ENCODE measurements at regions of chr1 and their contacts with region 1.

Region 1: GRCh38 chr1:162878000-162878596 is 17.1 kb upstream of the CCDC190 start:
- DNase-seq: no peak
- H3K4me3 ChIP-seq: no peak overlapping the region
- CTCF ChIP-seq: peak; percentile 70

Region 2: GRCh38 chr1:162847839-162848453 is 30.2 kb before region 1 on chr1:
- CTCF ChIA-PET with region 1: interaction called, 47 read pairs
- POLR2A ChIA-PET with region 1: no interaction called
- DNase-seq: no peak
- H3K4me3 ChIP-seq: no peak overlapping the region
- CTCF ChIP-seq: peak; percentile 83

Region 3: GRCh38 chr1:162861101-162861500 is 17.0 kb before region 1 on chr1 and contains the start of gene CCDC190:
- CTCF ChIA-PET with region 1: interaction called, 43 read pairs
- POLR2A ChIA-PET with region 1: interaction called, 6 read pairs
- DNase-seq: no peak
- H3K4me3 ChIP-seq: no peak within 1 kb of the TSS
- CTCF ChIP-seq: no peak

Region 4: DNA sequence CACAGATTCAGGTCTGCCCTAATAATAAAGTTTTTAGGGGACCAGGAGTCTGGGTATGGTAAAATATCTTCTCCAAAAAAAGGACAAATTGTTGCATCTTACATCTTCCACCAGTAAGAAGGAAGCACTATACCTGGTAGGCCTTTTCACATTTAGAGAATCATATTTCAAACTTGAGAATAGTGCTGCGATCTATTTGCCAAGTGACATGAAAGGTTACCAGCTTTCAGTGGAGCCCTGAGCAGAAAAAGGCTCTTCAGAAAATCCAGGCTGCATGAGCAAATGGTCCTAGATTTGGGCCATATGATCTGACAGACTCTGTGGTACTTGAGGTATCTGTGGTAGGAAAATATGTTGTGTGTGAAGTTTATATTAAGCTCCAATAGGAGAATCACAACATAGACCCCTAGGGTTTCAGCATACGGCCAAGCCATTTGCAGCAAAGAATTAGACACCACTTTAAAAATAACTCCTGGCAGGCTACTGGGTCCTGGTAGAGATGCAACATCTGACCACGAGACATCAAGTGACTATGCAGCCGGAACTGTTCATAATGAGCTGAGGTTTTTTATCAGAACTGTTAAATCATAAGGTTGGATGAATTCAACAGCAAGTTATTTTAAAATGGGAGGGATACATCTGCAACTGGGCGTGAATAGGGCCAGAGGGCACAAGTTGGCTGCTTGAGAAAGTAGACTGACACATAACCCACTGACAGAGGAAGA is 21.5 kb after region 1 on chr1:
- CTCF ChIA-PET with region 1: interaction called, 17 read pairs
- POLR2A ChIA-PET with region 1: no interaction called
- DNase-seq: peak; percentile 83
- H3K4me3 ChIP-seq: no peak overlapping the region
- CTCF ChIP-seq: no peak

Region 5: GRCh38 chr1:163022129-163022528 is 144.0 kb after region 1 on chr1:
- CTCF ChIA-PET with region 1: no interaction called
- POLR2A ChIA-PET with region 1: no interaction called
- DNase-seq: no peak
- H3K4me3 ChIP-seq: no peak overlapping the region
- CTCF ChIP-seq: no peak

Region 6: DNA sequence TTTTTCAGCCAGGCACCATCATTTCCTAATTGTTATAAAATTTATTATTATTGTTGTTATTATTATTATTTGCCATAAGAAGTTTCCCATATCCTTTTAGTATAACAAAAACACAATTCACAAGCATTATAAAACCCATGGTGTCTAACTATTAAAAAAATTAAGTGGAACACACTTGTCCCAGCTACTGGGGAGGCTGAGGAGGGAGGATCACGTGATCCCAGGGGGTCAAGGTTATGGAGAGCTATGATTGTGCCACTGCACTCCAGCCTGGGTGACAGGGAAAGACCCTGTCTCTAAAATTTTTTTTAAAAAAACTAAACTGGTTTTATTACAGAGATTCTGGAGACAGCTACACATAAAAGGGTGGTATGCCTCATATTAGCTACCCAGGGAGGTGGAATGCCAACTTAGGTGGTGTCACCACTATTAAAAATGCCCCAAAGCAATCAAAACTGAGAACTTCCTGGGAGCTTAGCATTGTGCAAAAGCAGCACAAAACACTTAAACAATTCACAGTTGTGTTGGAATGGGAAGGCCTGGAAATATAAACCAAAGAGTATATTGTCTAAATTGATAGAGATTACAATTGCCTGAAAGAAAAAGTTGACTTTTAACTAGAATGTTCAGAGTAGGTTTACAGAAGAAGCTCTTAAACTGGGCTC is 182.4 kb after region 1 on chr1:
- CTCF ChIA-PET with region 1: interaction called, 17 read pairs
- POLR2A ChIA-PET with region 1: interaction called, 3 read pairs
- DNase-seq: no peak
- H3K4me3 ChIP-seq: no peak overlapping the region
- CTCF ChIP-seq: no peak

Region 7: DNA sequence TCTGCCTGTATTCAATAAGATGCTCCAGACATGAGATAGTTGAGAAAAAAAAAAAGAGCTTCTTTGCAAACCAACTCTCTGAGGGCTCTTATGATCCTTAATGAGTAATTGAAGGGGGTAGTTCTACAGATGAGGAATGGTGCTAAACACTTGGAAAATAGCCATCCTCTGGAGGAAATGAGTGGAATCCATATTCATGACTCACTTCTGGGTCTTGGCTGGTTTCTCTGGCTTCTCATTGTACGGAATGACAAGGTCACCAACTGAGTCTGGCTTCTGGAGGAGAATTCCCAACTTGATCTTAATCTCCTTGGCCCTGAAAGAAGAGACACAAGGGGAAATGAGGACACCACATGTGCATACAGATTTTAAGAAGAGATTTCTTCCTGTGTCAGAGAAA is 290.0 kb after region 1 on chr1:
- CTCF ChIA-PET with region 1: interaction called, 15 read pairs
- POLR2A ChIA-PET with region 1: no interaction called
- DNase-seq: peak; percentile 96
- H3K4me3 ChIP-seq: no peak overlapping the region
- CTCF ChIP-seq: no peak

Region 8: GRCh38 chr1:163315773-163316374 is 437.8 kb after region 1 on chr1:
- CTCF ChIA-PET with region 1: interaction called, 45 read pairs
- POLR2A ChIA-PET with region 1: no interaction called
- DNase-seq: no peak
- H3K4me3 ChIP-seq: no peak overlapping the region
- CTCF ChIP-seq: peak; percentile 39

Measured in AG04449 (cell line).